ENCODE measurements at regions of chr5 and their contacts with region 1.

Region 1: GRCh38 chr5:136080483-136081216 is 51.9 kb downstream of the TGFBI start:
- DNase-seq: no peak
- ATAC-seq: no peak
- H3K4me3 ChIP-seq: no peak overlapping the region
- H3K27ac ChIP-seq: no peak overlapping the region
- H3K4me1 ChIP-seq: peaks cover 29% of the 10 kb centered on the region
- H3K27me3 ChIP-seq: no peaks in the 10 kb centered on the region
- CTCF ChIP-seq: no peak
- EP300 ChIP-seq: no peak
- POLR2A ChIP-seq: no peak
- RAD21 ChIP-seq: no peak

Region 2: GRCh38 chr5:135880278-135880677 is 200.4 kb before region 1 on chr5:
- CTCF ChIA-PET with region 1: no interaction called
- POLR2A ChIA-PET with region 1: no interaction called
- in situ Hi-C with region 1: loop called (anchors 5 kb)
- intact Hi-C with region 1: loop called (anchors 1 kb)
- DNase-seq: peak; percentile 48
- ATAC-seq: peak; percentile 93
- H3K4me3 ChIP-seq: no peak overlapping the region
- H3K27ac ChIP-seq: no peak overlapping the region
- H3K4me1 ChIP-seq: peaks cover 14% of the 10 kb centered on the region
- H3K27me3 ChIP-seq: 0 out of 5 replicates have a peak, but pooled peaks cover 0 to 2% of the 10 kb centered on the region in 2 experiments
- CTCF ChIP-seq: peak; percentile 64
- EP300 ChIP-seq: no peak
- POLR2A ChIP-seq: no peak
- RAD21 ChIP-seq: peak; percentile 46; the same call in 1 of the 2 replicates

Region 3: DNA sequence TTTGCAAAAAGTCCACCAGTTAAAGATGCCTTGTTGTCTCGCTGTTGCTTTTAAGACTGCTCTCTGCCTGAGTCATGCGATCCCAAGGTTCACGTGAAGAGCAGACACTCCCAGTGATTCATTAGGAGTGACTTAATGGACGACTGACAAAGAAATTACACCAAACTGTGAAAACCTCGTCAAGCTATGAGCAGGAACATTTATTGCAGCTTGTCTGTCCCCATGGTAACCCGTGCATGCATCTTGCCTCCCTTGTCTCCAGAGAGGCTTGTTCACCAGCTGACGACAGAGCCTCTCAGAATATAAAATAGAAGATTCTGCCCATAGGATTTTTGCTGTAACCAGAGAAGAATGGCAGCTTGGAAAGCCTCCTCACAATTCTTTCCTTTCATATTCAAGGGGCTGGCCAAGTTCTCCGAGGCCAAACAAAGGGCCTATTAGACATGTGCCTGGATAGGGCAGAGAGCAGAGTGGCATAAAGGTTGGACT is 1065.8 kb after region 1 on chr5:
- CTCF ChIA-PET with region 1: no interaction called
- POLR2A ChIA-PET with region 1: no interaction called
- in situ Hi-C with region 1: no loop called
- intact Hi-C with region 1: no loop called
- DNase-seq: no peak
- ATAC-seq: no peak
- H3K4me3 ChIP-seq: no peak overlapping the region
- H3K27ac ChIP-seq: no peak overlapping the region
- H3K4me1 ChIP-seq: no peaks in the 10 kb centered on the region
- H3K27me3 ChIP-seq: peaks cover 0 to 4% of the 10 kb centered on the region in 2 experiments; a peak in 1 of 5 replicates
- CTCF ChIP-seq: no peak
- EP300 ChIP-seq: no peak
- POLR2A ChIP-seq: no peak
- RAD21 ChIP-seq: no peak